Caco-2 (cell line): ENCODE measurements at regions of chr12 and their contacts with region 1.

Region 1: DNA sequence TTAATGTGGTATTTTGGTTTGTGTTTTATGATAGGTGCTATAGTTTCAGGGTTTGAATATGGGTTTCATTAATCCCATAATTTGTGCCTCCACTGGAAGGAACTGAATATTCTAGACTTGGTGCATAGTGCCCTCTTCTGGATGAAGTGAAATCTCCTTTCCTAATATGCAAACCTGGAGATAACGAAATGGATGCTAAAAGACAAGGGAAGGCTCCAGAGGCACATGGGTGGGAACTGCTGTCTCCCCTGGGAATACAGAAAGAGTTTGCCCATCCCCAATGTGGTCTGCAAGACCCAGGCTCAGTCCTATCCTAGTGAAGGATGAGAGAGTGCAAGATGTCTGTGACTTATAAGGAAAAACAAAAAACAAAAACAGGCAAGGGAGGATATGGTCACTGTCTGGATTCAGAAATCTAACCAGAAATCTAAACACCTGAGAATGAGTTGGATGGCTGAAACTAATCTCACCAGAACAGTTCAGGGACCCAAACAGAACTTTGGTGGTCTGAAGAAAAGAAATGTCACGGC is 142.3 kb upstream of the TMPO start:
- DNase-seq: peak in 1 of 2 experiments; percentile 56
- H3K4me3 ChIP-seq: no peak overlapping the region
- H3K4me3 Mint-ChIP-seq: no peak overlapping the region
- H3K27ac Mint-ChIP-seq: no peak overlapping the region
- H3K4me1 ChIP-seq: no peaks in the 10 kb centered on the region
- H3K4me1 Mint-ChIP-seq: peaks cover 7% of the 10 kb centered on the region
- H3K27me3 ChIP-seq: no peaks in the 10 kb centered on the region
- H3K27me3 Mint-ChIP-seq: peaks cover 1% of the 10 kb centered on the region
- CTCF ChIP-seq: peak; percentile 54 to 68

Region 2: DNA sequence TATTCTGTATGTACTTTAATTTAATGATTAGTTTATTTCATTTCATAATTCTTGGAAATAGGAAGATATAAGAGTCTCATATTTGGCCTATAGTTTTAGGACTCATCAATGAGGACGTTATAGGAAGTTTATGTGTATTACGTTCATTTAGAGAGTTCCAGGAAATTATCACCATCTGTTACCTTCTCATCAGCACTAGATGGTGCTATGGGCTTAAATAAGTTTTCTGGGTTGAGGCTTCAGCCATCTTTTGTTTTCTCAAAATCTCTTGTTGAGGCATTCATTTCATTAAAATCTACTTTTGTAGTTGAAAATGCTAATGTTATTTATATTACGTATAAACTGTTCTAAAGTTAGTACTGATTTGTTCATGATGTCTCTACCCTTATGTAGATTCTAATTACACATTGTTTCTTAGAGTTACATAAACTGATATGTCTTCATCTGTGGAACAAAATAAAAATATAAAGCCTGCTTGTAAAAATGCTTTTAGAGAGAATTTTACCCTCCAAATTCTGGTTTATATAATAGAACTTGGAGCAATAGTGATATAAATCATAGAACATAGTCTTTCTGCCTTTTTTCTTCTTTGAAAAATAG is 1794.5 kb before region 1 on chr12:
- CTCF ChIA-PET with region 1: no interaction called
- POLR2A ChIA-PET with region 1: no interaction called
- intact Hi-C with region 1: loop called (anchors 10 kb)
- DNase-seq: peak in 1 of 2 experiments; percentile 33
- H3K4me3 ChIP-seq: no peak overlapping the region
- H3K4me3 Mint-ChIP-seq: no peak overlapping the region
- H3K27ac Mint-ChIP-seq: no peak overlapping the region
- H3K4me1 ChIP-seq: no peaks in the 10 kb centered on the region
- H3K4me1 Mint-ChIP-seq: no peaks in the 10 kb centered on the region
- H3K27me3 ChIP-seq: no peaks in the 10 kb centered on the region
- H3K27me3 Mint-ChIP-seq: peaks cover 3% of the 10 kb centered on the region
- CTCF ChIP-seq: peak; percentile 45 to 54

Region 3: GRCh38 chr12:98002712-98003493 is 370.2 kb before region 1 on chr12:
- CTCF ChIA-PET with region 1: no interaction called
- POLR2A ChIA-PET with region 1: no interaction called
- intact Hi-C with region 1: loop called (anchors 5 kb)
- DNase-seq: peak; percentile 54 to 67
- H3K4me3 ChIP-seq: no peak overlapping the region
- H3K4me3 Mint-ChIP-seq: no peak overlapping the region
- H3K27ac Mint-ChIP-seq: no peak overlapping the region
- H3K4me1 ChIP-seq: no peaks in the 10 kb centered on the region
- H3K4me1 Mint-ChIP-seq: no peaks in the 10 kb centered on the region
- H3K27me3 ChIP-seq: no peaks in the 10 kb centered on the region
- H3K27me3 Mint-ChIP-seq: no peaks in the 10 kb centered on the region
- CTCF ChIP-seq: peak; percentile 61 to 72

Region 4: GRCh38 chr12:98227162-98227561 is 145.9 kb before region 1 on chr12:
- CTCF ChIA-PET with region 1: no interaction called
- POLR2A ChIA-PET with region 1: no interaction called
- intact Hi-C with region 1: loop called (anchors 10 kb)
- DNase-seq: no peak
- H3K4me3 ChIP-seq: no peak overlapping the region
- H3K4me3 Mint-ChIP-seq: no peak overlapping the region
- H3K27ac Mint-ChIP-seq: no peak overlapping the region
- H3K4me1 ChIP-seq: no peaks in the 10 kb centered on the region
- H3K4me1 Mint-ChIP-seq: peaks cover 10% of the 10 kb centered on the region
- H3K27me3 ChIP-seq: no peaks in the 10 kb centered on the region
- H3K27me3 Mint-ChIP-seq: peaks cover 3% of the 10 kb centered on the region
- CTCF ChIP-seq: peak; percentile 16 to 22

Region 5: GRCh38 chr12:98397316-98398105 is 24.4 kb after region 1 on chr12:
- CTCF ChIA-PET with region 1: no interaction called
- POLR2A ChIA-PET with region 1: no interaction called
- intact Hi-C with region 1: loop called (anchors 1 kb)
- DNase-seq: peak; percentile 70 to 79
- H3K4me3 ChIP-seq: no peak overlapping the region
- H3K4me3 Mint-ChIP-seq: peak overlapping the region; percentile 66
- H3K27ac Mint-ChIP-seq: peak overlapping the region; percentile 65
- H3K4me1 ChIP-seq: peaks cover 36% of the 10 kb centered on the region
- H3K4me1 Mint-ChIP-seq: peaks cover 16% of the 10 kb centered on the region
- H3K27me3 ChIP-seq: no peaks in the 10 kb centered on the region
- H3K27me3 Mint-ChIP-seq: no peaks in the 10 kb centered on the region
- CTCF ChIP-seq: peak; percentile 74 to 82